Stomach (tissue), 19 donors: ENCODE measurements at regions of chr5 and their contacts with region 1.

Region 1: GRCh38 chr5:170348137-170348633 is 41.0 kb downstream of the KCNMB1 start:
- DNase-seq: no peak
- H3K4me3 ChIP-seq: no peak overlapping the region
- H3K27ac ChIP-seq: no peak overlapping the region
- H3K4me1 ChIP-seq: peaks cover 0 to 8% (median 2%) of the 10 kb centered on the region in 4 donors
- H3K27me3 ChIP-seq: peaks cover 0 to 14% (median 6%) of the 10 kb centered on the region in 3 donors
- CTCF ChIP-seq: peak in 2 of 7 experiments; percentile 8 to 15
- EP300 ChIP-seq: no peak
- POLR2A ChIP-seq: no peak

Region 2: DNA sequence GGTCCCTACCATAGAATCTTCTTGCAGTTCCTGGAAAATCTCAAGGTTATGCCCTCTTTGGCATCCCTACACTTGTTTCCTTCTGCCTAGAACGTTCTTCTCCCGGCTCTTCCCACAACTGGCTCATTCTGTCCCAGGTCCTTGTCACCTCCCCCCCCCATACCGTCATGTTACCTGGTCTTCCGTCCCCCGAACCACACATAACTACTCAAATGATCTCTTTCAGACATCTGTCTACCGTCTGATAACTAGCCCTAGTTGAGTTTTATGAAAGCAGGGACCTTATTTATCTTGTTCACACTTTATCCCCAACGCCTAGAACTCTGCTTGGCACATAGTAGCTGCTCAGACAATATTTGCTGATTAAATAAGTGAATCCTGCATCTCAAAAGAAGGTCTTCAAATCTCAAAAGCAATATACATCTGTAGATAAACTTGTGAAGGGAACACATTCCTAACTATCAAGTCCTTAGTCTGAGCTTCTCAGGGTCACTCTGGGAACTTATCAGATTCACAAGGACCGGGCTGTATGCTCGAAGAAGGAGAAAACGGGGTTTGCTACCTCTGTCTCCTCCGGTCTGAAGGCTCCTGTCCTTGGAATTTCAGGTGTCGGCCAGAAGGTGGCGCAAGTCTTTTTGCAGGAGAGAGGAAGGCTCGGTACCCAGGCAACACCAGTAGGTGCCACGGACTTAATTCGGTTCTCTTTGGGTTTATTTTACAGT is 80.6 kb before region 1 on chr5:
- intact Hi-C with region 1: loop called (anchors 10 kb)
- DNase-seq: peak; percentile 70 to 90
- H3K4me3 ChIP-seq: peak overlapping the region in 2 of 4 donors; percentile 15 to 16
- H3K27ac ChIP-seq: peak overlapping the region in 4 of 5 donors; percentile 49 to 78 (median 72)
- H3K4me1 ChIP-seq: peaks cover 15 to 44% (median 20%) of the 10 kb centered on the region in 4 donors
- H3K27me3 ChIP-seq: peaks cover 0 to 19% (median 5%) of the 10 kb centered on the region in 3 donors
- CTCF ChIP-seq: peak in 5 of 7 experiments; percentile 73 to 85 (median 80)
- EP300 ChIP-seq: no peak
- POLR2A ChIP-seq: no peak